Head of caudate nucleus (tissue), 42 donors: ENCODE measurements at regions of chr14 and their contacts with region 1.

Region 1: GRCh38 chr14:88551094-88551870 is 3.5 kb downstream of the PTPN21 start:
- DNase-seq: peak; percentile 76 to 95 (median 88)

Region 2: DNA sequence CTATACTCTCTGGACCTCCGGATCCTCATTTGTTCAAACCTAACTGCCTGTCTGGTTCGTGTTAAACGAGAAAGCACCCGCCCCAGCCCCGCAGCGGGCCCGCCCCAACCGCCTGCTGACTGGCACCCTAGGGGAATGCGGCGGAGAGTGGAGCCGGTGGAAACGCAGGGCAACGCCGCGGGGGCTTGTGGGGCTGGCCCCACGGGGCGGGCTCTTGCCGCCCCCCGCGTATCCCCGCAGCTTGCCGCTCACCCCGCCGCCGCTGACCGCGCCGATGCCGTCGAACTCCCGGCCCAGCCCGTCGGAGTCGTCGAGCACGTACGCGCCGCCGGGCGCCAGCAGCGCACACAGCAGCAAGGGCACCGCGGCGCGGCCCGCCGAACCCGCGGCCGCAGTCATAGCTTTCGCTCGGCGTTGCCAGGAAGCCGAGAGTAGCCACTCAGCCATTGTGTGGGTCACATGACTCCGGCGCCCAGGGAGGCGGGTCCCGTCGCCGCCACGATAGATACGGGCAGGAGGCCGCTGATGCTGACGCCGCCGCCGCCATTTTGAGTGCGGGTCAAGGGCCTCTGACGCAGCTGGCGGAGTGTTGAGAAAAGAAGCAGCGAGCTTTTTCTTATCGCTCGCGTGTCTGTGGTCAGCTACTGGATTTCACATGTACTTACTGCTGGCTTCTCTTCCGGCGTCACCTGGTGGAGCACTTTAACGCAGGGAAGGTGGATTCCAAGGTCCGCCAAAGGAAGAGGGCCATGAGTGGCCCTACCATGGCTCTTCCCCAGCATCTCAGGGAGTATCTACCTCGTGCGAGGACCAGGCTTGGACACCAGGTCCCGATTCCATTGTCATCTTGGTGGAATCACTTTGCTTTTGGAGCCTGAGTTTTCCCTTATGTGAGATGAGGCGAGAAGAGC is 558.3 kb before region 1 on chr14 and contains the start of gene GALC:
- intact Hi-C with region 1: loop called (anchors 10 kb)
- DNase-seq: peak; percentile 93 to 98 (median 96)

Region 3: DNA sequence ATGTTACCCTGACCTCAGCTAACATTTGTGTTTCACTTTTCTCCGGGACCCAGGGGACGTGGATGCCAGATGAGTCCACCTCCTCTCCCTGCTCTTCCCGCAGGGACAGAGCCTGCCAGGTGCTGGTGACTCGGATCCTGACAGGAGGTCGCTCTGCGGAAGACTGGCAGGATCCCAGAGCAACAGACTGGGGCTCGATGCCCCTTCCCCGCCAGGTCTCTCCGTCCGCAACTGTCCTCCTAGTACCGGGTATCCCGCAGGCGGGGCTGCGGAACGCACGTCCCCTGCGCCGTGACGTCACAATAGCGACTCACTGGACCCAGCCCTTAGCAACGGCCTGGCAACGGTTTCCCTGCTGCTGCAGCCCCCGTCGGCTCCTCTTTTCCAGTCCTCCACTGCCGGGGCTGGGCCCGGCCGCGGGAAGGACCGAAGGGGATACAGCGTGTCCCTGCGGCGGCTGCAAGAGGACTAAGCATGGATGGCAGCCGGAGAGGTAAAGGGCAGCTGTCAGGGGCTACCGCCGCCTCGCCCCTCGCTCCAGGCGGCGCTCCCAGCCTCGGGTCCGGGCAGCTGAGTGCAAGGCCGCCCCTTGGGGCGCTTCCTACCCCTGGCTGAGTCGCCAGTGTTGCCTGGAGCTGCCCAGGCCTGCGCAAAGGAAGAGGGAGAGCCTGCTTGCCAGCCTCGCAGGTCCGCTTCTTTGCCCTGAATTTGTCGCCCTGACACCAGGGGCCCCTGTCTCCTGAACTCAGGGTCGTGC is 165.8 kb before region 1 on chr14 and contains the start of gene SPATA7:
- intact Hi-C with region 1: loop called (anchors 10 kb)
- DNase-seq: peak; percentile 95 to 99 (median 97)

Region 4: DNA sequence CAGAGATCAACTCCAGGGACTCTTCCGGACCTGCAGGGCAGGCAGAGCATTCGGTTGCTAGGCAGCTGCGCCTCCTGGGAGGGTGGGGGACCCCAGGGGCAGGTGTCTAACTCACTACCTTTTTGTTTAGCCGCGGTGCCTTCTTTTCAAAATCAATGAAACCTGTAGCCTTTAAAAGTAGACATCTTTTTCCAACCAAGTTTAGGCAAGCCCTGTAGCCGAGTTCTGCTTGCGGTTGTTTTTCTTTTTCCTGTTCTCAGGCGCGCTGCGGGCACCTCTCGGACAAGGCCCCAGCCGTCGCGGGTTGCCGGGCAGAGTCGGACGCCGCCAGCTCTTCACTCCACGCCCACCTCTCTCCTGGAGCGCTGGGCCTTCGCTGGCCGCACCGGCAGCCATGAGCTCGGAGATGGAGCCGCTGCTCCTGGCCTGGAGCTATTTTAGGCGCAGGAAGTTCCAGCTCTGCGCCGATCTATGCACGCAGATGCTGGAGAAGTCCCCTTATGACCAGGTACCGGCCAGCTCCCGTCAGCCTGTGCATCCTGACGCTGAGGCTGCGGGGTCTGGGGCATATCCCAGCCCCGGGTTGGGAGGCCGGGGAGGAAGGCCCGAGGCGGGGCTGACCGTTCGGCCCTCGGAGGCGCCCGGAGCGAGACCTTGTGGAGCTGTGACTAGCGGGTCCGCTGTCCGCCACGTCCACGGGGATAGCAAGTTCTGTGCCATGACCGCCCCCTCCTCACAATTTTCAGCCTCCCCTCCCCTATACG is 273.2 kb after region 1 on chr14 and contains the start of gene TTC8:
- intact Hi-C with region 1: no loop called
- DNase-seq: peak; percentile 60 to 94 (median 85)